Naive thymus-derived CD4-positive, alpha-beta T cell (primary cell): ENCODE measurements at regions of chr18 and their contacts with region 1.

Region 1: DNA sequence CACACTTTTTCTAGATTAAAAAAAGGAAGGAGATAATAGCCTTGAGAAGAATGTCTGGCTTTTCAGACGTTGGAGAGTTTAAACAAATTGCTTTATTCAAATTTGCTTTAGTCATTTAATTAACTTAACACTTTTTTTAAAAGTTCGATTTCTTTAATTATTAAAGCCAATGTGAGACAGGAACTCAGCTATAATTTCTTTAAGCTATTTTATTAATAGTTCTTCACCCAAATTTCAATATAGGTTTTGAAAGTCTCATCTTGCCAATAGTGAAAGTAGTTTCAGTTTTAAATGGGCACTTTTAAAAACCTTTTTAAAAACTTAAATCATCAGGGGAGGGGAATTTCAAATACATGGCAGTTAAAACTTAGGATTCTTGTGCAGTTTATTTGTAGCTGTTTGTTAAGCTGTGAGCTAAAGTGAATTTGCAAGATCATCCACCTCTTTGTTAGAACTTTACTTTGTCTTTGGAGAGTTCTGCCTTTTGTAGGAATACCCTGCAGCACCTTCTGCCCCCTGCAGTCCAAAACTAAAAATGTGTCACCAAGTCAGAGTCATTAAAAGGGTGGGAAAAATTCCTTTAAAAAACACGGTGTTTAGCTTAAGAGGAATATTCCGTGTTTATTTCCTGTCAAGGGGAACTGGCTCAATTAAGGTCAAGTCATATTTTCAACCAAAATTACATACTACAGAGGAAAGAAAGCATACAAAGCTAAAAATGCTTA is 4.6 kb downstream of the TGIF1 start:
- DNase-seq: peak in 7 of 9 donors; percentile 40 to 64 (median 60)
- ATAC-seq: no peak
- H3K4me3 ChIP-seq: peak overlapping the region; percentile 48
- H3K4me3 Mint-ChIP-seq: peak overlapping the region; percentile 85 to 96 (median 94)
- H3K27ac ChIP-seq: peak overlapping the region; percentile 96
- H3K27ac Mint-ChIP-seq: peak overlapping the region; percentile 89 to 100 (median 99)
- H3K4me1 ChIP-seq: peaks cover 15 to 35% of the 10 kb centered on the region in 2 donors
- H3K4me1 Mint-ChIP-seq: peaks cover 22 to 70% (median 32%) of the 10 kb centered on the region in 7 donors
- H3K27me3 ChIP-seq: no peaks in the 10 kb centered on the region
- H3K27me3 Mint-ChIP-seq: no peaks in the 10 kb centered on the region

Region 2: DNA sequence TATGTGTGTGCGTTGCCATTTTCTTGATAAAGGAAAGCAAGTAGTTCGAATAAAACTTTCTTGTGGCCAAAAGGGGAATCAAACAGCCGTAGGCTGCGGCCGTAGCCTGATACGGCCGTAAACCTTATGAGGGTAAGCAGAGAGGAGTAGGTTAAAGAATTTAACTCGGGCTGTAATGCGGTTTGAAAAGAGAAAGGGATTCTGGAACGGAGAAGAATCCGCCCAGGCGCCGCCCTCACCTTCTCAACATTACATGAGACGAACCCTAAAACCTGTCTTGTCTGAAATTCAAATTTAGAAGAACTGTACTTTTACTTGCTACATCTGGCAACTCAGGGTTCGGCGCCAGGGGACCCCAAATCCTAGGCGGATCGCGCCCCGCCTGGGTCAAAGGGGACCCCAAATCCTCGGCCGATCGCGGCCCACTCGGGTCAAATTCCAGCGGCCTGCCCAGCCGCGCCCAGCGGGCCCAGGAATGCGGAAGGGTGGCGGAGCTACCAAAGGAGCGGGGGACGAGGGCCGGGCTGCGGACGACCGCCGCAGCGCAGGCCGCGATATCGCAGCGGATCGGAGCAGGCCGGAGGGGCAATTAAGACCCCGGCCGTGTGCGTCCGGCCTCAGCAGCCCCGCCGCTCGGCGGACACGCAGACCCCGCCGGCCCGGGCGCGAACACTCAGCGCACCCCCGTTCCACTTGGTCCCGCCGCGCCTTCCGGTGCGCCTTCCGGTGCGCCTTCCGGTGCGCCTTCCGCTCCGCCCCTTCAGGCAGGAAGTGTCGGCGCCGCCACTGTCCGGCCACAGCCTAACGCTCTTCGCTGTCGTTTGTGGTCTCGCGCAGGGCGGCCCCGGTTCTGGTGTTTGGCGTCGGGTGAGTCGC is 192.9 kb before region 1 on chr18 and contains the start of gene MYL12B:
- CTCF ChIA-PET with region 1: interaction called, 3 read pairs
- POLR2A ChIA-PET with region 1: interaction called, 14 read pairs
- intact Hi-C with region 1: loop called (anchors 1 kb)
- DNase-seq: peak; percentile 72 to 88 (median 84)
- ATAC-seq: peak; percentile 87
- H3K4me3 ChIP-seq: peak within 1 kb of the TSS; percentile 81
- H3K4me3 Mint-ChIP-seq: peak within 1 kb of the TSS; percentile 87 to 100 (median 96)
- H3K27ac ChIP-seq: peak within 1 kb of the TSS; percentile 96
- H3K27ac Mint-ChIP-seq: peak within 1 kb of the TSS; percentile 95 to 100 (median 99)
- H3K4me1 ChIP-seq: peaks cover 54 to 66% of the 10 kb centered on the region in 2 donors
- H3K4me1 Mint-ChIP-seq: peaks cover 48 to 87% (median 83%) of the 10 kb centered on the region in 7 donors
- H3K27me3 ChIP-seq: no peaks in the 10 kb centered on the region
- H3K27me3 Mint-ChIP-seq: no peaks in the 10 kb centered on the region
- total RNA-seq, gene MYL12B: 140 to 300 (median 169) TPM

Region 3: GRCh38 chr18:3297025-3297984 is 157.2 kb before region 1 on chr18:
- CTCF ChIA-PET with region 1: interaction called, 4 read pairs
- POLR2A ChIA-PET with region 1: interaction called, 24 read pairs
- intact Hi-C with region 1: loop called (anchors 1 kb)
- DNase-seq: peak; percentile 74 to 93 (median 90)
- ATAC-seq: peak; percentile 100
- H3K4me3 ChIP-seq: peak overlapping the region; percentile 60
- H3K4me3 Mint-ChIP-seq: peak overlapping the region; percentile 89 to 98 (median 95)
- H3K27ac ChIP-seq: peak overlapping the region; percentile 62
- H3K27ac Mint-ChIP-seq: peak overlapping the region; percentile 21 to 93 (median 84)
- H3K4me1 ChIP-seq: peaks cover 6 to 9% of the 10 kb centered on the region in 2 donors
- H3K4me1 Mint-ChIP-seq: peaks cover 0 to 16% (median 10%) of the 10 kb centered on the region in 7 donors
- H3K27me3 ChIP-seq: no peaks in the 10 kb centered on the region
- H3K27me3 Mint-ChIP-seq: peaks cover 13 to 41% (median 30%) of the 10 kb centered on the region in 5 donors

Region 4: DNA sequence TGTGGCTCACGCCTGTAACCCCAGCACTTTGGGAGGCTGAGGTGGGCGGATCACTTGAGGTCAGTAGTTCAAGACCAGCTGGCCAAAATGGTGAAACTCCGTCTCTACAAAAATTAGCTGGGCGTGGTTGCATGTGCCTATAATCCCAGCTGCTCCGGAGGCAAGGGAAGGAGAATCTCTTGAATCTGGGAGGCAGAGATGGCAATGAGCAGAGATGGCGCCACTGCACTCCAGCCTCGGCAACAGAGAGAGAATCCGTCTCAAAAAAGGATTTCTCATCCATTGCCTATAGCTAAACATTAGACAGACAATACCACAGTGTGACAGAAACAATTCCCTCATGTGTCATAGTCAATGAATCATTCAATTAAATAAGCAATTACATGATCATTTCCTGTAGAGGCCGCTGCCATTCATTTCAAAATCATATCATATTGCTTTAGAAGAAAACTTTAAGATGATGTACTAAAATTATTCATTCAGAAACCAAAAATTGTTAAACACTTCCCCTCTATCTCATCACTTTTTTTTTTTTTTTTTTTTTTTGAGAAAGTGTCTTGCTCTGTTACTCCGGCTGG is 74.1 kb before region 1 on chr18:
- CTCF ChIA-PET with region 1: no interaction called
- POLR2A ChIA-PET with region 1: no interaction called
- intact Hi-C with region 1: loop called (anchors 1 to 2 kb)
- DNase-seq: no peak
- ATAC-seq: peak; percentile 59
- H3K4me3 ChIP-seq: no peak overlapping the region
- H3K4me3 Mint-ChIP-seq: no peak overlapping the region
- H3K27ac ChIP-seq: no peak overlapping the region
- H3K27ac Mint-ChIP-seq: no peak overlapping the region
- H3K4me1 ChIP-seq: no peaks in the 10 kb centered on the region
- H3K4me1 Mint-ChIP-seq: no peaks in the 10 kb centered on the region
- H3K27me3 ChIP-seq: no peaks in the 10 kb centered on the region
- H3K27me3 Mint-ChIP-seq: peaks cover 0 to 10% (median 4%) of the 10 kb centered on the region in 5 donors

Region 5: GRCh38 chr18:3466045-3466444 is 11.5 kb after region 1 on chr18:
- CTCF ChIA-PET with region 1: interaction called, 24 read pairs
- POLR2A ChIA-PET with region 1: interaction called, 50 read pairs
- intact Hi-C with region 1: no loop called
- DNase-seq: no peak
- ATAC-seq: no peak
- H3K4me3 ChIP-seq: no peak overlapping the region
- H3K4me3 Mint-ChIP-seq: peak overlapping the region in 1 of 10 donors; percentile 16
- H3K27ac ChIP-seq: no peak overlapping the region
- H3K27ac Mint-ChIP-seq: peak overlapping the region in 6 of 9 donors; percentile 3 to 70 (median 47)
- H3K4me1 ChIP-seq: peaks cover 11 to 15% of the 10 kb centered on the region in 2 donors
- H3K4me1 Mint-ChIP-seq: peaks cover 9 to 23% (median 21%) of the 10 kb centered on the region in 7 donors
- H3K27me3 ChIP-seq: no peaks in the 10 kb centered on the region
- H3K27me3 Mint-ChIP-seq: no peaks in the 10 kb centered on the region

Region 6: DNA sequence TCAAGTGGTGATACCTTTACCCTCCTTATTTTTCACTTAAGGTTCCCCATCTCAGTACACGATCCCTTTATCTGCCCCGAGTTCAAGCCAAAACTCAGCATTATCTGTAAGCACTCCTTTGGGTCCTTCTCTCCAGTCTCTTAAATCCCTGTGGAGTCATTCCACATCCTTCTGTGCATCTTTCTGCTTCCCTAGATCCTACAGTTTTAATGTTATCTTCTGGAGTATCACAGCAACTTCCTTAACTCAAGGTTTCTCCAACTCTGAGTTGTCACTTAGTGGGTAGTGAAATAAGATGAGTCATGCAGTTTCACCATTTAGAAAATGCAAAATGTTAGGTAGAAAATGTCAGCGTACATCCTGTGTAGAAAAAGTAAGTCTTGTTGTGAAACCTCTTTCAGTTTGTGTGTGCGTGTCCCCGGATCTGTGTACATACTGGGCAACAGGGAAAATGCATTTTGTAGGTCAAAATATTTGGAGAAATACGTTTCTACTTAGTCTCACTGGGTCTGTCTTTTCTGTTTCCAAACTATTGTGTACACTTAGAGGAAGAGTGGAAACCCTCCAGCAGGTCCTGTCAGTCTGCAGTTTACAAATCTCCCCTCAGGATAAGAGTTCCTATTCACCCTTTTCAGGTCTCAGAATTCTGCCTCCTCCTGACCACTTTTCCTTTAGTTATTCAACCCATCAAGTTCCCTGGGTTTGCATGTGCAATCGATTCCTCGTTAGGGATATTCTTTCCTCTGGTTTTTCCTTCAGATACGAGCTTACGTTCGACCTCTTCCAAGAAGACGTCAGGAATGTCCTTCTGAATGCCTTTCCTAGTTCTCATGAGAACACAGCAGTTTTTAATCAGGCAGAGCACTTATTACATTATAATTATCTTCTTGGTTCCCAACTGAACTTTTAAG is 150.2 kb after region 1 on chr18:
- CTCF ChIA-PET with region 1: interaction called, 6 read pairs
- POLR2A ChIA-PET with region 1: interaction called, 10 read pairs
- intact Hi-C with region 1: no loop called
- DNase-seq: peak in 6 of 9 donors; percentile 20 to 55 (median 48)
- ATAC-seq: peak; percentile 71
- H3K4me3 ChIP-seq: peak overlapping the region; percentile 43
- H3K4me3 Mint-ChIP-seq: no peak overlapping the region
- H3K27ac ChIP-seq: peak overlapping the region; percentile 52
- H3K27ac Mint-ChIP-seq: no peak overlapping the region
- H3K4me1 ChIP-seq: peaks cover 32 to 38% of the 10 kb centered on the region in 2 donors
- H3K4me1 Mint-ChIP-seq: peaks cover 0 to 27% (median 7%) of the 10 kb centered on the region in 7 donors
- H3K27me3 ChIP-seq: no peaks in the 10 kb centered on the region
- H3K27me3 Mint-ChIP-seq: no peaks in the 10 kb centered on the region